ENCODE measurements at regions of chr2 and their contacts with region 1.

Region 1: GRCh38 chr2:37156857-37157714 is at the start of gene EIF2AK2:
- DNase-seq: peak; percentile 91
- H3K4me3 ChIP-seq: peak within 1 kb of the TSS; percentile 85
- H3K4me3 Mint-ChIP-seq: peak within 1 kb of the TSS; percentile 96
- H3K27ac Mint-ChIP-seq: peak within 1 kb of the TSS; percentile 95
- H3K4me1 ChIP-seq: peaks cover 12% of the 10 kb centered on the region
- H3K4me1 Mint-ChIP-seq: peaks cover 37% of the 10 kb centered on the region
- H3K27me3 ChIP-seq: no peaks in the 10 kb centered on the region
- H3K27me3 Mint-ChIP-seq: no peaks in the 10 kb centered on the region
- CTCF ChIP-seq: no peak
- total RNA-seq, gene EIF2AK2: 41.7 and 50.1 TPM in 2 replicates

Region 2: GRCh38 chr2:37110306-37111212 is 46.5 kb before region 1 on chr2:
- CTCF ChIA-PET with region 1: no interaction called
- POLR2A ChIA-PET with region 1: no interaction called
- intact Hi-C with region 1: no loop called
- DNase-seq: no peak
- H3K4me3 ChIP-seq: no peak overlapping the region
- H3K4me3 Mint-ChIP-seq: no peak overlapping the region
- H3K27ac Mint-ChIP-seq: no peak overlapping the region
- H3K4me1 ChIP-seq: no peaks in the 10 kb centered on the region
- H3K4me1 Mint-ChIP-seq: peaks cover 4% of the 10 kb centered on the region
- H3K27me3 ChIP-seq: no peaks in the 10 kb centered on the region
- H3K27me3 Mint-ChIP-seq: no peaks in the 10 kb centered on the region
- CTCF ChIP-seq: no peak

Region 3: DNA sequence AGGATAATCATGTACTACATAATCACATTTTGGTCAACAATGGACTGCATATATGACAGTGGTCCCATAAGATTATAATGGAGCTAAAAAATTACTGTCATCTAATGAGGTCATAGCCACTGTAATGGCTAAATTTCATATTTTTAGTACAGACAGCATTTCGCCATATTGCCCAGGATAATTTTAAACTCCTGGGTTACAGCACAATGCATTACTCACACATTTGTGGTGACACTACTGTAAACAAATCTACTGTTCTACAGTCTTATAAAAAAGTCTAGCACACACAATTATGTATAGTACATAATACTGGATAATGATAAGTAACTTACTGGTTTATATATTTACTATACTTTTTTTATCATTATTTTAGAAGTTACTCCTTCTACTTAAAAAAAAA is 13.1 kb before region 1 on chr2:
- CTCF ChIA-PET with region 1: interaction called, 3 read pairs
- POLR2A ChIA-PET with region 1: interaction called, 3 read pairs
- intact Hi-C with region 1: loop called (anchors 2 kb)
- DNase-seq: no peak
- H3K4me3 ChIP-seq: no peak overlapping the region
- H3K4me3 Mint-ChIP-seq: no peak overlapping the region
- H3K27ac Mint-ChIP-seq: no peak overlapping the region
- H3K4me1 ChIP-seq: peaks cover 8% of the 10 kb centered on the region; the same call in 1 of the 2 replicates
- H3K4me1 Mint-ChIP-seq: peaks cover 11% of the 10 kb centered on the region
- H3K27me3 ChIP-seq: no peaks in the 10 kb centered on the region
- H3K27me3 Mint-ChIP-seq: no peaks in the 10 kb centered on the region
- CTCF ChIP-seq: no peak

Region 4: GRCh38 chr2:37585982-37586621 is 429.0 kb after region 1 on chr2:
- CTCF ChIA-PET with region 1: no interaction called
- POLR2A ChIA-PET with region 1: no interaction called
- intact Hi-C with region 1: no loop called
- DNase-seq: no peak
- H3K4me3 ChIP-seq: no peak overlapping the region
- H3K4me3 Mint-ChIP-seq: no peak overlapping the region
- H3K27ac Mint-ChIP-seq: no peak overlapping the region
- H3K4me1 ChIP-seq: peaks cover 79% of the 10 kb centered on the region
- H3K4me1 Mint-ChIP-seq: peaks cover 55% of the 10 kb centered on the region
- H3K27me3 ChIP-seq: no peaks in the 10 kb centered on the region
- H3K27me3 Mint-ChIP-seq: no peaks in the 10 kb centered on the region
- CTCF ChIP-seq: no peak